Naive thymus-derived CD4-positive, alpha-beta T cell (primary cell): ENCODE measurements at regions of chr6 and their contacts with region 1.

Region 1: DNA sequence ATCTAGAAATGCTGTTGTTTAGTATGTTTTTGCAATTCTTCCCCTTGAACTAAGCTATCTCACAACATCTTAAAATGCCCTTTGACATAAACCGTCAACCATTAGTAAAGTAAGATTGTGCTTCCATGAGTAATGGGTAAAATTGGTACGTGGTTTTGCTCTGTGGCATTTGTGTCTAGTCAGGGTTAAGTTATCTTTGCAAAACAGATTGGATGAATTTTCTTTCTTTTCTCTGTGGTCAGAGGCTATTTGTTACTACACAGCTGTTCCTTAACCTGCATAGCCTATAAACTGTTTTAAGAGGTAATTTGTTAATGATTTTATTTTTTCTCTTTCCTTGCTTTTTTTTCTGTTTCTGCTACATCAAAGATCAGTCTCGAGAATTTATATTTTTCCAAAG is 75.4 kb downstream of the RPP40 start:
- DNase-seq: no peak
- ATAC-seq: no peak
- H3K4me3 ChIP-seq: no peak overlapping the region
- H3K4me3 Mint-ChIP-seq: no peak overlapping the region
- H3K27ac ChIP-seq: no peak overlapping the region
- H3K27ac Mint-ChIP-seq: no peak overlapping the region
- H3K4me1 ChIP-seq: peaks cover 0 to 4% of the 10 kb centered on the region in 2 donors
- H3K4me1 Mint-ChIP-seq: peaks cover 21 to 75% (median 62%) of the 10 kb centered on the region in 7 donors
- H3K27me3 ChIP-seq: no peaks in the 10 kb centered on the region
- H3K27me3 Mint-ChIP-seq: no peaks in the 10 kb centered on the region

Region 2: DNA sequence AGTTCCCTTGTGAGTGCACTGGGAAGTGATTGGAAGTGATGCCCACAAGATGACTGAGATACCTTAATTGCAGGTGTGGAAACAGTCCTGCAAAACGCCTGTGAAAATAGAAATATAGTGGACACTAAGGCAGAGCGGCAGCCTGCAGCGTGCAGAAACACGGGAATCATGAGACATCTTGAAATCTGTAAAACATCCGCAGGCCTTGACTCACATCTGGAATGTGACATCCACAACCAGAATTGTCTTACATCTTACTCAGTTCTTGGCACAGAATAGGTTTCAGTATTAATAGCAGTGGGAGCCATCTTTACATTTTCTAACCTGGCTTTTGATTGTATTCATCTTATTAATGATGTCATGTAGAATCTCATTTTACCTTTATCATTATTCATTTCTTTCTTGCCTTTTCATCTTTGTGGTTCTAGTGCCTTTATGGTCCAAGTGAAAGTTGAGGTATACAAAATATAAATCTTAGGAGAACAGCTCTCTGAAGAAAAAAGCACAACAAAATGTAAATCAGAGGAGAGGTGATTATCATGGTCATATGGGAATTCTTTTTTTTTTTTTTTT is 107.6 kb before region 1 on chr6:
- CTCF ChIA-PET with region 1: no interaction called
- POLR2A ChIA-PET with region 1: no interaction called
- intact Hi-C with region 1: no loop called
- DNase-seq: no peak
- ATAC-seq: no peak
- H3K4me3 ChIP-seq: no peak overlapping the region
- H3K4me3 Mint-ChIP-seq: peak overlapping the region in 3 of 10 donors; percentile 5 to 52 (median 42)
- H3K27ac ChIP-seq: no peak overlapping the region
- H3K27ac Mint-ChIP-seq: no peak overlapping the region
- H3K4me1 ChIP-seq: peaks cover 7 to 15% of the 10 kb centered on the region in 2 donors
- H3K4me1 Mint-ChIP-seq: peaks cover 9 to 67% (median 42%) of the 10 kb centered on the region in 7 donors
- H3K27me3 ChIP-seq: no peaks in the 10 kb centered on the region
- H3K27me3 Mint-ChIP-seq: no peaks in the 10 kb centered on the region

Region 3: DNA sequence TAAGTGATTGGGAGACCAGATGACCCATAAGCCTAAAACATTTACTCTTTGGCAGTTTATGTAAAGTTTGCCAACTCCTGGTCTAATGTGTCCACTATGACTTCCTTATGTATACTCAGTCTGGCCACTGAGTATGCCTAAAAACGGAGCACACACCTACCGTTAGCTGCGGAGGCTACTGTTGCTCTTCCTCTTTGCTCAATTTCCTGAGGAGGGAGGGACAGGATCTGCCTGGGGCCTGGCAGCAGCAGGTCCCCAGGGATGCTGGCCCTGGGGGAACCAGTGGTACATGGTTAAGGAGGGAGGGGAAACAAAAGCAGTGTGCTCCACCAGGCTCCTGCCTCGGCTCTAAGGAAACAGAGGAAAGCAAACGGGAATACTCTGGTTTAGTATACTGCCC is 38.7 kb before region 1 on chr6:
- CTCF ChIA-PET with region 1: no interaction called
- POLR2A ChIA-PET with region 1: no interaction called
- intact Hi-C with region 1: no loop called
- DNase-seq: no peak
- ATAC-seq: peak; percentile 42
- H3K4me3 ChIP-seq: no peak overlapping the region
- H3K4me3 Mint-ChIP-seq: peak overlapping the region in 1 of 10 donors; percentile 56
- H3K27ac ChIP-seq: no peak overlapping the region
- H3K27ac Mint-ChIP-seq: peak overlapping the region in 1 of 9 donors; percentile 63
- H3K4me1 ChIP-seq: no peaks in the 10 kb centered on the region
- H3K4me1 Mint-ChIP-seq: peaks cover 0 to 51% (median 45%) of the 10 kb centered on the region in 7 donors
- H3K27me3 ChIP-seq: no peaks in the 10 kb centered on the region
- H3K27me3 Mint-ChIP-seq: no peaks in the 10 kb centered on the region

Region 4: DNA sequence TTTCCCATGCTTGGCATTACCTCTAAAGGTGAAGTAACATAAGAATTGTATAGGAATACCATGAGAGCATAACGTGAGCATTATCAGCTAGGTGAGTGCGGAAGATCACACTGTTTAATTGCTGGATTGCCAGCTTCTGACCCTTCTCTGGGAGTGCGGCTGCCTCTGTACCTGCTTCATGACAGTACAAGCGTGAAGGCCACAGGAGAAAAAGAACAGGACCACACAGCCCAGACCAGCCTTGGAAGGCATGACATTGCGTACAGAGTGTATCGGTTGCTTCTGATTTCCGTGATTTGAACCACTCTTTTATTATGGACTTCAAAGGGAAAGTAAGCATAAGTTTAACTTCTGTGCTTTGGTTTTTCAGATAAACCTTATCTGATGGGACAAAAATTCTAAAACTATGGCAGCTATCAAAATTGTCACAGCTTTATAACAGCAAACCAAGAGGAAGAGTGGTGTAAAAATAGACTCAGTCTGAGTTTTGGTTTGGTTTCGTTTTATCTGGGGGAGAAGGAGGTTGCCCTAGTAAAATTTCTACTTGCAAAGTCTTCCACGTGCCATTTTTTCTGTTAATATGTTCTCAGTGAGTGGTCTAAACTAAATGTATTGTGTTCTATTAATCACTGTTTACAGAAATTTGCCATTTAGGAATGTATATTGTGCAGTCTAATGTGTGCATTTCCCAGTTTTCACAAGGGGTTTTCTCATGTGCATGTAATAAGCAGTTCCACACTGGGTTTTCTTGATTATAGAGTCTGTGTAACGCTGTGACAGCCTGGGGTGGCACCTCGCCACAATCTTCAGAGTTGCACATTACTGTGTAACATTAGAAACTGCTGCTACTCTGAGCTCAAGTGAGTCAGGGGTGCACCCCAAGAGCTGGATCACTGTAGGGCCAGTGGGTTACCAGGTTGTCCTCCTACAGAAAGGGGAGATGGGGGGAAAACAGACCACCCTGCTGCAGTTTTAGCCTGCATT is 21.8 kb before region 1 on chr6:
- CTCF ChIA-PET with region 1: no interaction called
- POLR2A ChIA-PET with region 1: no interaction called
- intact Hi-C with region 1: loop called in 1 of 2 experiments (anchors 2 kb)
- DNase-seq: peak in 1 of 9 donors; percentile 8
- ATAC-seq: peak; percentile 37
- H3K4me3 ChIP-seq: peak overlapping the region; percentile 34
- H3K4me3 Mint-ChIP-seq: peak overlapping the region; percentile 46 to 85 (median 74)
- H3K27ac ChIP-seq: no peak overlapping the region
- H3K27ac Mint-ChIP-seq: peak overlapping the region; percentile 6 to 87 (median 59)
- H3K4me1 ChIP-seq: peaks cover 14 to 19% of the 10 kb centered on the region in 2 donors
- H3K4me1 Mint-ChIP-seq: peaks cover 32 to 61% (median 52%) of the 10 kb centered on the region in 7 donors
- H3K27me3 ChIP-seq: no peaks in the 10 kb centered on the region
- H3K27me3 Mint-ChIP-seq: no peaks in the 10 kb centered on the region